A549 (cell line): ENCODE measurements at regions of chr4 and their contacts with region 1.

Region 1: GRCh38 chr4:7067452-7068278 is at the start of gene GRPEL1:
- DNase-seq: peak; percentile 83 to 98
- ATAC-seq: peak; percentile 94 to 97
- H3K4me3 ChIP-seq: peak within 1 kb of the TSS; percentile 83
- H3K27ac ChIP-seq: peak within 1 kb of the TSS; percentile 86 to 97
- H3K4me1 ChIP-seq: peaks cover 19% of the 10 kb centered on the region; the same call in 2 of the 3 replicates
- CTCF ChIP-seq: no peak
- EP300 ChIP-seq: no peak
- POLR2A ChIP-seq: peak; percentile 98
- RAD21 ChIP-seq: no peak
- polyA plus RNA-seq, gene GRPEL1: 50.9 and 72.0 TPM in 2 replicates

Region 2: DNA sequence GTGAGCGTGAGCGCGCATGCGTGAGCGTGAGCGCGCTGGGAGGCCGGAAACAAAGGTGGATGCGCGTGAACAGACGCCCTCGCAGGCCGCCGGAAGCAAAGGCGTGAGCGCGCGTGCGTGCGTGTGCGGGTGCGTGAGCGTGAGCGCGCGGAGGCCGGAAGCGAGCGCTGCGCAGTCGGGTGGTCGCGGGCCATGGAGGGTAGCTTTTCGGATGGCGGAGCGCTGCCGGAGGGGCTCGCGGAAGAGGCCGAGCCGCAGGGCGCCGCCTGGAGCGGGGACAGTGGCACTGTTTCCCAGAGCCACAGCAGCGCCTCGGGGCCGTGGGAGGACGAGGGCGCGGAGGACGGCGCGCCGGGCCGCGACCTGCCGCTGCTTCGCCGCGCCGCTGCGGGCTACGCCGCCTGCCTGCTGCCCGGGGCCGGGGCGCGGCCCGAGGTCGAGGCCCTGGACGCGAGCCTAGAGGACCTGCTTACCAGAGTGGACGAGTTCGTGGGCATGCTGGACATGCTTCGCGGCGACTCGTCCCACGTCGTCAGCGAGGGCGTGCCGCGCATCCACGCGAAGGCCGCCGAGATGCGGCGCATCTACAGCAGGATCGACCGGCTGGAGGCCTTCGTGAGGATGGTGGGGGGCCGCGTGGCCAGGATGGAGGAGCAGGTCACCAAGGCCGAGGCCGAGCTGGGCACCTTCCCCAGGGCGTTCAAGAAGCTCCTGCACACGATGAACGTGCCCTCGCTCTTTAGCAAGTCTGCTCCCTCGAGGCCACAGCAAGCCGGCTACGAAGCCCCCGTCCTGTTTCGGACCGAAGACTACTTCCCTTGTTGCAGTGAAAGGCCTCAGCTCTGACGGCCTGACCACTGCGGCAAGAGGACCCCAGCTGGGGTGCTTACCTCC is 351.4 kb before region 1 on chr4 and contains the start of gene BLOC1S4:
- CTCF ChIA-PET with region 1: interaction called, 39 read pairs
- POLR2A ChIA-PET with region 1: interaction called, 3 read pairs
- DNase-seq: peak; percentile 82 to 93
- ATAC-seq: peak; percentile 79 to 82
- H3K4me3 ChIP-seq: peak within 1 kb of the TSS; percentile 81
- H3K27ac ChIP-seq: peak within 1 kb of the TSS; percentile 92 to 99
- H3K4me1 ChIP-seq: peaks cover 21% of the 10 kb centered on the region; the same call in 1 of the 3 replicates
- CTCF ChIP-seq: no peak
- EP300 ChIP-seq: no peak
- POLR2A ChIP-seq: peak; percentile 69
- RAD21 ChIP-seq: no peak
- polyA plus RNA-seq, gene BLOC1S4: 11.7 and 13.2 TPM in 2 replicates

Region 3: GRCh38 chr4:6855692-6856297 is 211.9 kb before region 1 on chr4:
- CTCF ChIA-PET with region 1: no interaction called
- POLR2A ChIA-PET with region 1: no interaction called
- DNase-seq: peak; percentile 19 to 71
- ATAC-seq: peak; percentile 68 to 85; a peak in 5 of 6 replicates
- H3K4me3 ChIP-seq: no peak overlapping the region; the same call in 2 of the 3 replicates
- H3K27ac ChIP-seq: peak overlapping the region; percentile 73 to 84
- H3K4me1 ChIP-seq: peaks cover 26% of the 10 kb centered on the region
- CTCF ChIP-seq: no peak
- EP300 ChIP-seq: no peak
- POLR2A ChIP-seq: no peak
- RAD21 ChIP-seq: no peak

Region 4: GRCh38 chr4:6926681-6927478 is 140.8 kb before region 1 on chr4:
- CTCF ChIA-PET with region 1: interaction called, 12 read pairs
- POLR2A ChIA-PET with region 1: no interaction called
- DNase-seq: no peak
- ATAC-seq: no peak
- H3K4me3 ChIP-seq: no peak overlapping the region
- H3K27ac ChIP-seq: no peak overlapping the region
- H3K4me1 ChIP-seq: no peaks in the 10 kb centered on the region
- CTCF ChIP-seq: no peak
- EP300 ChIP-seq: no peak
- POLR2A ChIP-seq: no peak
- RAD21 ChIP-seq: no peak

Region 5: GRCh38 chr4:6986781-6987587 is 80.7 kb before region 1 on chr4:
- CTCF ChIA-PET with region 1: interaction called, 10 read pairs
- POLR2A ChIA-PET with region 1: interaction called, 3 read pairs
- DNase-seq: peak; percentile 70 to 88
- ATAC-seq: peak; percentile 89 to 91
- H3K4me3 ChIP-seq: peak overlapping the region; percentile 68
- H3K27ac ChIP-seq: peak overlapping the region; percentile 83 to 94
- H3K4me1 ChIP-seq: peaks cover 38% of the 10 kb centered on the region
- CTCF ChIP-seq: no peak
- EP300 ChIP-seq: no peak
- POLR2A ChIP-seq: 0 out of 2 replicates have a peak, but pooled peaks have one; percentile 5
- RAD21 ChIP-seq: peak in 1 of 2 experiments; percentile 23; a peak in 2 of 5 replicates

Region 6: DNA sequence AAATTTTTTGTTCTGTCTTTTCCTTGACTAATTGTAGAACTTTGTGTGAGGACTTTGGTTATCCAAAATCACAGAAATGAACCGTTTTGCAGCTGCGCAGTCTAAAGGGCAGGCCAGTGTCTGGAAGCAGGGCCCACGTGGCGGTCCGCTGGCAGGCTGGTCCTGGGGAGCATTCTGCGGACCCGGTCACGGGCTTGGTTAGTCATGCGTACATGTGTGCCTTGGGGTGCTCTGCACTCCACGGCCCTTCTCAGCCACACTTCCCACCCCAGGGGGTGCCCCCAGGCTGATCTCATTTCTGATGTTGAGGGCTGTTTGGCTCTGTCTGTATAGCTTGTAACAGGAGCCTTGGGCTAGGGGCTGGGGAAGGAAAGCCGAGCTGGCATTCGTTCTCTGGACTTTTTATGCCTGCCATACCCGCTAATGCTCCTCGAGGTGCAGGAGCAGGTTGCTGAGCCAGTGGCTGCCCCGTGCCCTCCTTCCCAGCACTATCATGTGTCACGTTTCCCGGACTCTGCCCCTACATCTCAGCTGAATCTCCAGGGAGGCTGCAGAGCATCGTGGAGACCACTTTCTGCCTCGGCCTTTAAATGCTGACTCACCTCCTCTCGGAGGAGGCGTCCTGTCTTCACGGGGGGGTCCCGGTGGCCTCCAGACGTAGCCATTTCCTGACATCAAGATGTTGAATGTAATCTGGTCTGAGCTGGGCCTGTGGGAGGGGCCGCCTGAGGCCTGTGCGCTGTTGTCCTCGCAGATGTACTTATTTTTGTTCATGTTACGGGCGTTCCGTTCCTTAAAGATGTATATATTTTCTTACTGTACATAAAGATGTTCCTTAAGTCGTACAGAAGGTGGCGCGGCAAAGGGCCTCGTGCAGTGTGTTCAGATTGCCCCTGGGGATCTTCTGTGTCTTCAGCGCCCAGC is 35.9 kb before region 1 on chr4:
- CTCF ChIA-PET with region 1: interaction called, 15 read pairs
- POLR2A ChIA-PET with region 1: interaction called, 6 read pairs
- DNase-seq: no peak
- ATAC-seq: no peak
- H3K4me3 ChIP-seq: no peak overlapping the region
- H3K27ac ChIP-seq: peak overlapping the region in 1 of 2 experiments; percentile 48; a peak in 2 of 6 replicates
- H3K4me1 ChIP-seq: peaks cover 53% of the 10 kb centered on the region
- CTCF ChIP-seq: no peak
- EP300 ChIP-seq: no peak
- POLR2A ChIP-seq: no peak
- RAD21 ChIP-seq: no peak

Region 7: DNA sequence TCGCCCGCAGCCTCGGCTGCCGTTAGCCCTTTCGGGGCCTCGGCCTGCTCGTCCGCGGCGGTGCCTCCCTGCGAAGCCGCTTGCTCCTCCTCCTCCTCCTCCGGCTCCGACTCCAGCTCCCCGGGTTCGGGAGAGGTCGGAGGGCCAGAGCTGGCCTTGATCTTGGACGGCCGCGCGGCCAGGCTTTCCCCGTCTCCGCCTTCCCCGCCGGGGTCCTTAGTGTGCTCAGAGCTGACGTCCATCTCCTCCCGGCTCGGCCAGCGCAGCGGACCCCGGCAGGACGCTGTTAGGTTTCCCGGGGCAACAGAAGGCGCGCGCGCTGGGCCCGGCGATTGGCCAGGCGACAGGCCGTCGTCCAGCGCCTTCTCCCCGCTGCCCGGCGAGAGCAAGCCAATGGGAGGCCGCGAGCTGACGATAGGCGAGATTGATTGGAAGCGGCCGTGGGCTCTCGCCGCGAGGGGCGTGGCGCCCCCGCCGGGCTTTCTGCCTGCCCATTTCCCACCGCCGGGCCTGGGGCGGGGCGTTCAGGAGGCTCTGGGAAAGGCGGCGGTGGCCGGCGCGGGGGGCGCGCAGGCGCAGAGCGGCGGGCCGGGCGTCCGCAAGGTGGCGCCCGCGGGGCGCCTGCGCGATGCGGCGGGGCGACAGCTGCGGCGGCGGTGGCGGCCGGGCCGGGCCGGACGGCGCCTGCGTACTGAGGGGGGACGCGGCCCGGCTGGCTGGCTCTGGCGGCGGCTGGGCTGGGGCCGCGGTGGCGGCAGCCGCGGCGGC is 24.8 kb before region 1 on chr4 and contains the start of gene TADA2B:
- CTCF ChIA-PET with region 1: interaction called, 26 read pairs
- POLR2A ChIA-PET with region 1: interaction called, 19 read pairs
- DNase-seq: peak; percentile 94 to 95
- ATAC-seq: peak; percentile 93 to 97
- H3K4me3 ChIP-seq: peak within 1 kb of the TSS; percentile 99
- H3K27ac ChIP-seq: peak within 1 kb of the TSS; percentile 96 to 98
- H3K4me1 ChIP-seq: peaks cover 8% of the 10 kb centered on the region; the same call in 2 of the 3 replicates
- CTCF ChIP-seq: peak; percentile 57
- EP300 ChIP-seq: no peak
- POLR2A ChIP-seq: peak; percentile 47
- RAD21 ChIP-seq: no peak
- polyA plus RNA-seq, gene TADA2B: 6.0 and 6.7 TPM in 2 replicates

Region 8: GRCh38 chr4:7081891-7082471 is 14.3 kb after region 1 on chr4:
- CTCF ChIA-PET with region 1: interaction called, 69 read pairs
- POLR2A ChIA-PET with region 1: no interaction called
- DNase-seq: peak; percentile 66
- ATAC-seq: peak; percentile 76 to 91
- H3K4me3 ChIP-seq: no peak overlapping the region
- H3K27ac ChIP-seq: no peak overlapping the region
- H3K4me1 ChIP-seq: no peaks in the 10 kb centered on the region
- CTCF ChIP-seq: peak; percentile 55
- EP300 ChIP-seq: no peak
- POLR2A ChIP-seq: no peak
- RAD21 ChIP-seq: peak; percentile 70 to 79